Right cardiac atrium (tissue), 5 donors: ENCODE measurements at regions of chr11 and their contacts with region 1.

Region 1: DNA sequence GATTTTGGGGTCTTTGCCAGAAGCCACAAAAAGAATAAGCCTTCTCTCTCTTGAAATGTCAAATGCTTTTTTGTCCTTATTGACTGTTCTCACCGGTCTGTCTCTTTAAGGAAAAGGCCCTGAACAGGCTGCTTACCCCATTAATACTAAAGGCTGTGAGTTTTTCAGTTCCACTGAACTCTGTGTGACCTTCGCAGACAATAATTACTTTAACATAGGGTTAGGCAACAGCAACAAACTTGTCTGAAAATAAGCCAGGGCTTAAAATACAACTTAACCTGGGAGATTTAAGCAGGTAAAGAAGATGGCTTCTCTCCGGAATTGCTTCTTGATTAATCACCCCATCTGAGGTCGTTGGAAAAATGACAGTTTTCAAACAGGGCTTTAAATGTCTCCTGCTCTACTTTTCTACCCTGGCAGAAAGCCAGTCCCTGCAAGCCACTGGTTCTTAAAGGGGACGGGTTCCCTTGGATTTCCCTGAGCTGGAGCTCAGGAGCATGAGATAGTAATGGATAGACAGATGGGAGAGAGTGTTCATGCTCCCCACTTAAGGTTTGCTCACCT is 69.4 kb downstream of the ARL14EP start:
- DNase-seq: peak in 2 of 3 donors; percentile 26 to 28
- ATAC-seq: peak; percentile 31 to 42
- H3K4me3 ChIP-seq: no peak overlapping the region
- H3K27ac ChIP-seq: no peak overlapping the region
- H3K4me1 ChIP-seq: peaks cover 4% of the 10 kb centered on the region
- H3K27me3 ChIP-seq: no peaks in the 10 kb centered on the region

Region 2: DNA sequence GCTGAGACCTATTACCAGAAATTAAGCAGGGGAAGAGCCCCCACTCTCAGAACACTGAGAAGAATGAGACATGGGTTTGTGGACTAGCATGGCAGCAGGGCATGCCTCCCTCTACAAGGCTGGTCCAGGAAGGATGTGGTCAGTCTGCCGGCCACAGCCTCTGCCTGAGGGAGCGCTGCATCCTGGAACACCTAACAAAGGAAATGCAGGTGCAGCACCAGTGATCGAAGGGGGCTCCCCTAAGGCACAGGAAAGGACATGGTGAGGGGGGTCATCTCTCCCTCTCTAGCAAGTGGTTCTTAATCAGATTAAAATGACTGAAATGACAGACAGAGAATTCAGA is 110.0 kb before region 1 on chr11:
- intact Hi-C with region 1: no loop called
- DNase-seq: peak in 1 of 3 donors; percentile 41
- ATAC-seq: no peak
- H3K4me3 ChIP-seq: no peak overlapping the region
- H3K27ac ChIP-seq: no peak overlapping the region
- H3K4me1 ChIP-seq: no peaks in the 10 kb centered on the region
- H3K27me3 ChIP-seq: no peaks in the 10 kb centered on the region

Region 3: GRCh38 chr11:30348035-30348434 is 44.3 kb before region 1 on chr11:
- intact Hi-C with region 1: no loop called
- DNase-seq: no peak
- ATAC-seq: no peak
- H3K4me3 ChIP-seq: no peak overlapping the region
- H3K27ac ChIP-seq: no peak overlapping the region
- H3K4me1 ChIP-seq: no peaks in the 10 kb centered on the region
- H3K27me3 ChIP-seq: no peaks in the 10 kb centered on the region

Region 4: DNA sequence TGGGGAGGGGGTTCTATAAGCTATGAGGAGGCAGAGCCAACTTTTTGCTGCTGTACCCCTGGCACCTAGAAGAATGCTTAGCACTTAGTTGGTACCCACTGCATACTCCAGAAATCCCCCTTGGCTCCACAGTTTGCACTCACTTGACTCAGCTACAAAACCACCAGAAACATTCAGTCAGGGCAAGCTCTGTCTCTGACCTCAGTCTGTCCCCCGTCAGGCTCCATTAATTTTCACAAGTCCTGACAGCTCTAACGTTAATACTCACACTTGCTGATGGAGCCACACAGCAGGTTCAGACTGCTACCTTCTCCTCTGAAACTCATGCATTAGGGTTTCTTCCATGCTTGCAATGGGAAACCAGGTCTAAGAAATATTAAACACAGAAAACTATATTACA is 112.2 kb after region 1 on chr11:
- intact Hi-C with region 1: loop called in 1 of 4 experiments (anchors 10 kb)
- DNase-seq: no peak
- ATAC-seq: no peak
- H3K4me3 ChIP-seq: no peak overlapping the region
- H3K27ac ChIP-seq: no peak overlapping the region
- H3K4me1 ChIP-seq: no peaks in the 10 kb centered on the region
- H3K27me3 ChIP-seq: no peaks in the 10 kb centered on the region